Adrenal gland (tissue), 19 donors: ENCODE measurements at regions of chr9 and their contacts with region 1.

Region 1: DNA sequence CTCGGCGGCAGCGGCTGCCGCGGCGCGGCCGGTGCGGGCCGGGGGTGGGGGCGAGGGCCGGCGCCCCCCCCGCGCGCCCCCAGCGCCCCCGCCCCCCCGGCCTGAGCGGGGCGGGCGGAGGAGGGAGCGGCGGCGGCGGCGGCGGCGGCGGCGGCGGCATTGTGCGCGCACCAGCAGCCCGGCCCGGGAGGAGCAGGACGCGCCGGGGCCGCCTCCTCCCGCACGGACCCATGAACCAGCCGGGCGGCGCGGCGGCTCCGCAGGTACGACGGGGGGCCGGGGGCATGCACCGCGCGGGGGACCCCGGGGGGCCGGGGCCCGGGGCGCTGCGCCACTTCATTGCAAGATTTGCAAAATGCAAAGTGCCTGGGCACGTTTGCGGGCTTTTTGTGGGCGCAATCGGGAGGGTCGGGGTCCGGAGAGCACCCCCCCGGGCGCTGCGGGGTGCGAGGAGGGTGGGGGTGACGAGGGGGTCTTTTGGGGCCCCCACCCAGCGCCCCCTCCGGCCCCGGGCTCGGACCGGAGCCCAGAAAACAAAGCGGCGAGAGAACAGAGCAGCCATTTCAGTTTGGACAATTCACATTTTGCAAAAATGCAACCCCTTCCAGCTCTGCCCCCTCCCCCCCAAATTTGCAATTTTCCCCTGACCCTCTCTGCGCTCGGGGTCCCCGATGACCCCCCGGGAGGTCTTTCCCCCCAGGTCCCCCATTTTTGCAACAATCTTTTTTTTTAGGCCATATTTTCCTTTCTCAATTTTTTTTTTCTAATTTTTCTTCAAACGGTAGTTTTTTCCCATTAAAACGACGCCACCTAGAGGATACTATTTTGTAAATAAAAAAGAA is at the start of gene ZNF618:
- DNase-seq: peak in 2 of 7 donors; percentile 42 to 47
- H3K4me3 ChIP-seq: peak within 1 kb of the TSS in 3 of 4 donors; percentile 62 to 100 (median 78)
- H3K27ac ChIP-seq: peak within 1 kb of the TSS in 3 of 5 donors; percentile 77 to 89 (median 88)
- H3K4me1 ChIP-seq: peaks cover 12 to 41% of the 10 kb centered on the region in 2 donors
- H3K27me3 ChIP-seq: no peaks in the 10 kb centered on the region
- CTCF ChIP-seq: peak in 5 of 6 experiments; percentile 21 to 69 (median 63)
- POLR2A ChIP-seq: no peak
- total RNA-seq, gene ZNF618: 6.6 to 21.3 (median 11.9) TPM

Region 2: GRCh38 chr9:113737517-113738271 is 138.7 kb before region 1 on chr9:
- intact Hi-C with region 1: loop called in 1 of 2 experiments (anchors 10 kb)
- DNase-seq: peak; percentile 48 to 82 (median 67)
- H3K4me3 ChIP-seq: no peak overlapping the region
- H3K27ac ChIP-seq: no peak overlapping the region
- H3K4me1 ChIP-seq: no peaks in the 10 kb centered on the region
- H3K27me3 ChIP-seq: no peaks in the 10 kb centered on the region
- CTCF ChIP-seq: peak; percentile 72 to 83 (median 75)
- POLR2A ChIP-seq: no peak

Region 3: DNA sequence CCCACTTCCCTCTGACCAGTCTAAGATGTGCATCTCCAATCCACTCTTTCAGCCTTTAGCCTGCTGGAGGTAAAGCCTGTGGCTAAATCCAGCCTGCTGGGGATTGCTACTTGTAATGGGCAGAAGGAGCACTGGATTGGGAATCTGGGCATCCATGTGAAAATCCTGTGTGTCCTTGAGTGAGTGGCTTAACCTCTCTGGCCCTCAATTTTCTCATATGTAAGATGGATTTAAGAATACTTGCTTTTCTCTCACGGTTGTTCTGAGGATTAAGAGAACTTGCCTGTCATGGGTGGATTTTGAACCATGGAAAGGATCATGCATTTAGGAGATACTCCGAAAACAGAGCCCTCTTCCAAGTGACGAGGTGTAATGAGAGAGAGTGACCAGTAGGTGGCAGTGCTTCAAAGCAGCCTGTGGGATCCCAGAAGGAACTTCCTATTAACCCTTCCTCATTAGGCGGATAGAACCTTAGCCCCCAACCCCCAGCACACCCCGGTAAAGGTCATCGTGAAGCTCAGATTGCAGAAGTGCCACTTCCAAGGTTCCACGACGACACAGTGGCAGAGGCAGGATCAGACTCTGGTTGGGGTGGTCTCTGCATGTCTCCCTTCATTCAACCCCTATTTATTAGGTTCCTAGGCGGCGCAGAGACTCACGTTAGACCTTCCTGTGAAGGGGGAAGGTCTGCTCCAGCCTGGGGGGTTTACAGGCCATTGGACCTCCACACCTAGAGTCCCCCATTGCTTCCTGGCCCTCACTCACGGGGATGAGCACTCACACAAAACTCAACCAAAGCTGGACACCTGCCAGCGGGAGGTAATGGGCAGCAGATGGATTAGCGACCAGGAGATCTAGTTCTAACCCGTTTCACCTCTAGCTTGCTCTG is 69.0 kb before region 1 on chr9:
- intact Hi-C with region 1: loop called in 1 of 2 experiments (anchors 5 kb)
- DNase-seq: peak; percentile 31 to 79 (median 56)
- H3K4me3 ChIP-seq: no peak overlapping the region
- H3K27ac ChIP-seq: no peak overlapping the region
- H3K4me1 ChIP-seq: peaks cover 4 to 15% of the 10 kb centered on the region in 2 donors
- H3K27me3 ChIP-seq: no peaks in the 10 kb centered on the region
- CTCF ChIP-seq: peak; percentile 76 to 93 (median 87)
- POLR2A ChIP-seq: no peak

Region 4: DNA sequence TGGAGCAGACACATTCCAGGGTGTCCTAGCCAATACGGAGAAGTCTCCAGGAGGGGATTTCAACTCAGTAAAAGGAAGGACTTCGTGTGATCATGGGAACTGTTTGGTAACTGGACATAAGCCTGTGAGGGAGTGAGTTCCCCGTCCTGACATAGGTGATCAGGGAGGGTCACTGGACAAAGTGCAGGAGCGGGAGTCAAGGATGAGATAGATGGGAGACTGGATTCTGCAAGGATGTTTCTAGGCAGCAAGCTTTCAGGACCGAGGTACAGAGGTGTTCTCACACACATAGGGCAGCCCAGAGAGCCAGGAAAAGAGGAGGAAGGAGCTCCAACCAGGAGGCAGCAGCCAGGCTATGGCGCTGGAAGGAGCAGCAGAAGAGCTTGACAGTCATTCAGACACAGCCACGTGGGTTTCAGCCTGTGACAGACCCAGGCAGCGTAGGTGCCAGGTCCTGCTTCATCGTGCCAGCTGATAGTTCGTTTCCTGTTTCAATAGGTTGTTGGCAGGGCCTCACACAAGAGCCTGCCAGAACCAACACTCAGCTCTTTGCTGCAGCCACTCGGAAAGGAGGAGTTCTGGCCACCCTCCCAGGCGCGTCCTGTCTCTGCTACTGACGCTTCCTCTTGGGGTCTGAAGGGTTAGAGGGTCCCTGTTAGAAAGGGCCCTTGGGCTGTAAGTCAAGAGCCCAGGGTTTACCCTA is 117.6 kb after region 1 on chr9:
- intact Hi-C with region 1: loop called (anchors 10 kb)
- DNase-seq: peak; percentile 84 to 97 (median 95)
- H3K4me3 ChIP-seq: no peak overlapping the region
- H3K27ac ChIP-seq: peak overlapping the region in 3 of 5 donors; percentile 25 to 54 (median 45)
- H3K4me1 ChIP-seq: peaks cover 37 to 44% of the 10 kb centered on the region in 2 donors
- H3K27me3 ChIP-seq: no peaks in the 10 kb centered on the region
- CTCF ChIP-seq: peak in 1 of 6 experiments; percentile 7
- POLR2A ChIP-seq: peak in 1 of 2 donors; percentile 42